ENCODE measurements at regions of chr6 and their contacts with region 1.

Region 1: DNA sequence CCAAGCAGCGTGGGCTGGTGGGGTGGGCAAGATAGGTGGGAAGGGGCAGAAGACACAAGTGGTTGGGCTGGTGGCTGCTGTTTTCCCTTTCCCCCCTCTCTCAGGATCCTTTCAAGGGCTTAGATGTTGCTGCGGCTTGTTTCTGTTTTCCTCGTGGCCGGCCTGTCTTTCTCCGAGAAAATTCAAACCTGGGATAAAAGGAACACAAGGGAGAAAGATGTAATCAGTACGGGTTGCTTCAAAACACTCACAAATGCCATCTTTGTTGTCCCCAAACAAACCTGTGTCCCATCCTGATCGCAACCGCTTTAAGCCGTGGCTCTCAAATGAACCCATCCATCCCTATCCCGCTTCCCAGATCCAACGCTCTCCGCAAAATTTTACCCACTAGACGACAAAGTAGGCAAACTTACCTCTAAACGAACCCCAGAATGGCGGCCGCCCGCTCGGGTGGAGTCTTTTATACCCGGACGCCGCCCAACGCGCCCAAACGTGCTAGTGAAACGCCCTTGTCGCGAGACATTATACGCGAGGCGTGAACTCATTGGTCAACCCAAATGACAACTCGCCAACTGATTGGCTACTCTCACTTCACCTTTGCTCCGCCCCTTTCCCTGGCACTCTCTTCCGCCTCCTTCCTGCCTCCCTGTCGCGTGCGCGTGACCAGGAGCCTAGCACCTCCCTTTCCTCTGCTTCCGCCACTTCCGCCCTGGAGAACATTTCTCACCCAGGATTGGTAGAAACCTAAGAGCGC is at the start of gene PPP1R10:
- DNase-seq: peak; percentile 94 to 100 (median 98)
- ATAC-seq: peak; percentile 78 to 81 (median 78)
- H3K4me3 ChIP-seq: peak within 1 kb of the TSS; percentile 88 to 100
- H3K4me3 Mint-ChIP-seq: peak within 1 kb of the TSS; percentile 93 to 100 (median 98)
- H3K27ac ChIP-seq: peak within 1 kb of the TSS; percentile 100
- H3K27ac Mint-ChIP-seq: peak within 1 kb of the TSS; percentile 100
- H3K4me1 ChIP-seq: peaks cover 29 to 33% of the 10 kb centered on the region in 2 experiments
- H3K4me1 Mint-ChIP-seq: peaks cover 42 to 49% (median 43%) of the 10 kb centered on the region in 3 donors
- H3K27me3 ChIP-seq: no peaks in the 10 kb centered on the region
- H3K27me3 Mint-ChIP-seq: peaks cover 0 to 2% of the 10 kb centered on the region in 2 donors
- total RNA-seq, gene PPP1R10: 104 to 170 (median 163) TPM

Region 2: DNA sequence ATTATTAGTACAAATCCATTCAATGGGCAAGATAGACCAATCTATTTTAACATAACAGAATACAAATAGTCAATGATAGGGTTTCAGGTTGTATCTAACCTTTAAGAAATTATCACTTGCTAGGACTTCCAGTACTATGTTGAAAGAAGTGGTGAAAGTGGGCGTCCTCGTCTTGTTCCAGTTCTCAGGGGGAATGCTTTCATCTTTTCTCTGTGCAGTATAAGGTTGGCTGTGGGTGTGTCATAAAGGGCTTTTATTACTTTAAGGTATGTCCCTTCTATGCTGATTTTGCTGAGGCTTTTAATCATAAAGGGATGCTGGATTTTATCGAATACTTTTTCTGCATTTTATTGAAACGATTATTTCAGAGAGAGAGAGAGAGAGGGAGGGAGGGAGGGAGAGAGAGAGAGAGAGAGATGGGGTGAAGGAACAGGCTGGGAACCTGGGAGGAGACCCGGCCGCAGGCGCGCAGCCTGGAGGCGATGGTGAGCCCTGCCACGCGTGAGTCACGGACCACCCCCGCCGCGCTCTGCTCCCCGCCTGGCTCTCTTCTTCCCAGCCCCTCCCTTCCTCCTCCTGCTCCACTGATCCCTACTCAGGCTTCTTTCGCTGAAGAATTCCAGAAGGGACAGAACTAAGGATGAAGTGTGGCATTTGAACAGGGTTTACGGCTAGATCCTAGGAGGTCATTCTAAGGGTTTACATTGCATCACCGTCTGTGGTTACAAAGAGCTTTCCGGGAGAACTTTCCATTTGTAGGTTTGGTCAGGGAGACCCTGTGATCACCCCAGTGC is 173.1 kb before region 1 on chr6:
- CTCF ChIA-PET with region 1: no interaction called
- POLR2A ChIA-PET with region 1: interaction called in 1 of 2 experiments, 20 read pairs
- DNase-seq: no peak
- ATAC-seq: peak in 1 of 4 experiments; percentile 48
- H3K4me3 ChIP-seq: no peak overlapping the region
- H3K4me3 Mint-ChIP-seq: no peak overlapping the region
- H3K27ac ChIP-seq: no peak overlapping the region
- H3K27ac Mint-ChIP-seq: no peak overlapping the region
- H3K4me1 ChIP-seq: peaks cover 0 to 6% of the 10 kb centered on the region in 2 experiments
- H3K4me1 Mint-ChIP-seq: peaks cover 2 to 12% (median 10%) of the 10 kb centered on the region in 3 donors
- H3K27me3 ChIP-seq: peaks cover 24 to 54% of the 10 kb centered on the region in 2 experiments
- H3K27me3 Mint-ChIP-seq: peaks cover 83% of the 10 kb centered on the region in 2 donors

Region 3: DNA sequence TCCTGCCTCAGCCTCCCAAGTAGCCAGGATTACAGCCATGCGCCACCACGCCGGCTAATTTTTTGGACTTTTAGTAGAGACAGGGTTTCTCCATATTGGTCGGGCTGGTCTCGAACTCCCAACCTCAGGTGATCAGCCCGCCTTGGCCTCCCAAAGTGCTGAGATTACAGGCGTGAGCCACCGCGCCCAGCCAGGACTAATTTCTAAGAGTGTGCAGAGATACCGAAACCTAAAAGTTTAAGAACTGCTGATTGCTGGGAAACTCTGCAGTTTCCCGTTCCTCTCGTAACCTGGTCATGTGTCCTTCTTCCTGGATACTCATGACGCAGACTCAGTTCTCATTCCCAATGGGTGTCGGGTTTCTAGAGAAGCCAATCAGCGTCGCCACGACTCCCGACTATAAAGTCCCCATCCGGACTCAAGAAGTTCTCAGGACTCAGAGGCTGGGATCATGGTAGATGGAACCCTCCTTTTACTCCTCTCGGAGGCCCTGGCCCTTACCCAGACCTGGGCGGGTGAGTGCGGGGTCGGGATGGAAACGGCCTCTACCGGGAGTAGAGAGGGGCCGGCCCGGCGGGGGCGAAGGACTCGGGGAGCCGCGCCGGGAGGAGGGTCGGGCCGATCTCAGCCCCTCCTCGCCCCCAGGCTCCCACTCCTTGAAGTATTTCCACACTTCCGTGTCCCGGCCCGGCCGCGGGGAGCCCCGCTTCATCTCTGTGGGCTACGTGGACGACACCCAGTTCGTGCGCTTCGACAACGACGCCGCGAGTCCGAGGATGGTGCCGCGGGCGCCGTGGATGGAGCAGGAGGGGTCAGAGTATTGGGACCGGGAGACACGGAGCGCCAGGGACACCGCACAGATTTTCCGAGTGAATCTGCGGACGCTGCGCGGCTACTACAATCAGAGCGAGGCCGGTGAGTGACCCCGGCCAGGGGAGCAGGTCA is 127.6 kb before region 1 on chr6 and contains the start of gene HLA-E:
- CTCF ChIA-PET with region 1: interaction called in 1 of 2 experiments, 6 read pairs
- POLR2A ChIA-PET with region 1: interaction called, 7 to 24 read pairs
- DNase-seq: peak; percentile 69 to 99 (median 90)
- ATAC-seq: peak; percentile 78 to 84 (median 84)
- H3K4me3 ChIP-seq: peak within 1 kb of the TSS; percentile 82 to 93
- H3K4me3 Mint-ChIP-seq: peak within 1 kb of the TSS; percentile 98 to 99 (median 99)
- H3K27ac ChIP-seq: peak within 1 kb of the TSS; percentile 89
- H3K27ac Mint-ChIP-seq: peak within 1 kb of the TSS; percentile 98 to 99
- H3K4me1 ChIP-seq: peaks cover 34 to 54% of the 10 kb centered on the region in 2 experiments
- H3K4me1 Mint-ChIP-seq: peaks cover 40 to 59% (median 56%) of the 10 kb centered on the region in 3 donors
- H3K27me3 ChIP-seq: peaks cover 0 to 3% of the 10 kb centered on the region in 2 experiments
- H3K27me3 Mint-ChIP-seq: no peaks in the 10 kb centered on the region
- total RNA-seq, gene HLA-E: 1,114 to 1,417 (median 1,253) TPM

Region 4: DNA sequence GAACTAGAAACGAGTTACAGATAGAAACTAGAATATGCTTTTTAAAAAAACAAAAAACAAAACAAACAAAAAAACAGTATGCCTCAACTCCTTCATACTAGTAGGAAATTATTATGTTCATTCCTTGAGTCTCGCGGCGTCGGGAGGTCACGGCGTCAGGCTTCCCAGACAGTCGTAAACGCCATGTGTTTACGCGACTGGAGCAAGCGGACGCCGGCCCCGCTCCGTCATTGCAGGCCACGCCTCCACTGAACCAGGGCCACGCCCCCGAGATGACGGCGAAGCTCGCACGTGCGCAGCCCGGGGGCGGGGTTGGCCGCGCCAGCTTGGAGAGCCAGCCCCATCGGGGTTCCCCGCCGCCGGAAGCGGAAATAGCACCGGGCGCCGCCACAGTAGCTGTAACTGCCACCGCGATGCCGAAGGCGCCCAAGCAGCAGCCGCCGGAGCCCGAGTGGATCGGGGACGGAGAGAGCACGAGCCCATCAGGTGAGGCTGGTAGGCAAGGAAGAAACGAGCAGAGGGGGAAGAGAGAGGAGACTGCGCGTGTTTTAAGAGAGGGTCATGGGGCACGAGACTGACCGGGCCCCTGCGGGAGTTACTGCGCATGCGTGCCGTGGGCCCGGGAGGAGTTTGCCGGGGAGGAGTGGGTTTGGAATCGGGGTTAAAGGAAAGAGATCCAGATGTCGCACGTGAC is 45.8 kb before region 1 on chr6 and contains the start of gene ABCF1:
- CTCF ChIA-PET with region 1: interaction called in 1 of 2 experiments, 5 read pairs
- POLR2A ChIA-PET with region 1: interaction called, 4 to 17 read pairs
- DNase-seq: peak; percentile 97 to 100 (median 99)
- ATAC-seq: peak; percentile 94 to 98 (median 96)
- H3K4me3 ChIP-seq: peak within 1 kb of the TSS; percentile 71 to 92
- H3K4me3 Mint-ChIP-seq: peak within 1 kb of the TSS; percentile 97 to 100 (median 98)
- H3K27ac ChIP-seq: peak within 1 kb of the TSS; percentile 87
- H3K27ac Mint-ChIP-seq: peak within 1 kb of the TSS; percentile 98 to 99
- H3K4me1 ChIP-seq: peaks cover 27 to 43% of the 10 kb centered on the region in 2 experiments
- H3K4me1 Mint-ChIP-seq: peaks cover 62 to 69% (median 66%) of the 10 kb centered on the region in 3 donors
- H3K27me3 ChIP-seq: no peaks in the 10 kb centered on the region
- H3K27me3 Mint-ChIP-seq: no peaks in the 10 kb centered on the region
- total RNA-seq, gene ABCF1: 61.1 to 89.9 (median 73.8) TPM

Region 5: GRCh38 chr6:30600451-30600961 is 16.5 kb before region 1 on chr6:
- CTCF ChIA-PET with region 1: interaction called in 1 of 2 experiments, 10 read pairs
- POLR2A ChIA-PET with region 1: interaction called, 5 to 12 read pairs
- DNase-seq: no peak
- ATAC-seq: no peak
- H3K4me3 ChIP-seq: no peak overlapping the region
- H3K4me3 Mint-ChIP-seq: no peak overlapping the region
- H3K27ac ChIP-seq: no peak overlapping the region
- H3K27ac Mint-ChIP-seq: peak overlapping the region in 1 of 2 donors; percentile 52
- H3K4me1 ChIP-seq: peaks cover 6 to 26% of the 10 kb centered on the region in 2 experiments
- H3K4me1 Mint-ChIP-seq: peaks cover 21 to 39% (median 22%) of the 10 kb centered on the region in 3 donors
- H3K27me3 ChIP-seq: no peaks in the 10 kb centered on the region
- H3K27me3 Mint-ChIP-seq: no peaks in the 10 kb centered on the region

Region 6: GRCh38 chr6:30646458-30647241 is 29.7 kb after region 1 on chr6 and contains the start of gene C6orf136:
- CTCF ChIA-PET with region 1: no interaction called
- POLR2A ChIA-PET with region 1: no interaction called
- DNase-seq: peak; percentile 80 to 97 (median 92)
- ATAC-seq: peak; percentile 81 to 86 (median 83)
- H3K4me3 ChIP-seq: peak within 1 kb of the TSS; percentile 78 to 94
- H3K4me3 Mint-ChIP-seq: peak within 1 kb of the TSS; percentile 81 to 89 (median 85)
- H3K27ac ChIP-seq: peak within 1 kb of the TSS; percentile 84
- H3K27ac Mint-ChIP-seq: peak within 1 kb of the TSS; percentile 89 to 91
- H3K4me1 ChIP-seq: peaks cover 11 to 33% of the 10 kb centered on the region in 2 experiments
- H3K4me1 Mint-ChIP-seq: peaks cover 25 to 33% (median 28%) of the 10 kb centered on the region in 3 donors
- H3K27me3 ChIP-seq: no peaks in the 10 kb centered on the region
- H3K27me3 Mint-ChIP-seq: no peaks in the 10 kb centered on the region
- total RNA-seq, gene C6orf136: 24.5 to 39.8 (median 31.4) TPM

Region 7: DNA sequence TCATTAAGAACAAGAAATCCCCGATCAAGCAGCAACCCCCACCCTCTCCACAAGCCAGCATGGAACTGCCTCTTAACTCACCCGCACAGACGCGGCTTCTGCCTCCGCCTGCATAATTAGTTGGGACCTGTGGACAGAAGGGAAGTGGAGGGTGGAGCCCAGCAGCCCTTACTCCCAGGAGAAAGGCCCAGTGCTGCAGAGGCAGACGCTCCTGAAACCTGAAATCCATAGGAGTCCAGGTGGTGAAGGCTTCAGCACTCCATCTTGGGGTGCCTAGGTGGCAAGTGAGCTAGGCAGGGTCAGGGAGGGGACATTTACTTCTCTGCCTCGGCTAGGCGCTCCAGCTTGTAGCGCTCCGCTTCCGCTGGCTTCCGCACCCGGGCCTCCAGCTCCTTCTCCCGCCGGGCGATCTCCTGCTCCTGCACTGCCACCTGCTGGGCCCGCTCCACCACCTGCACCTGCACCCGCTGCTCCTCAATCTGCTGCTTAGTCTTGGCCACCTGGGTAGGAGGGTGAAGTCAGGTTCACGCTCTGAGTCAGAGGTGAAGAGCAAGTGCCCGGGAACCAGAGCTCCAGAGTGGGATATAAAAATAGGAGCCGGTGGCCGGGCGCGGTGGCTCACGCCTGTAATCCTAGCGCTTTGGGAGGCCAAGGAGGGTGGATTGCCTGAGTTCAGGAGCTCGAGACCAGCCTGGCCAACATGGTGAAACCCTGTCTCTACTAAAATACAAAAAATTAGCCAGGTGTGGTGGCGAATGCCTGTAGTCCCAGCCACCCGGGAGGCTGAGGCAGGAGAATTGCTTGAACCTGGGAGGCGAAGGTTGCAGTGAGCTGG is 113.8 kb after region 1 on chr6:
- CTCF ChIA-PET with region 1: no interaction called
- POLR2A ChIA-PET with region 1: interaction called in 1 of 2 experiments, 12 read pairs
- DNase-seq: peak; percentile 67 to 89 (median 79)
- ATAC-seq: peak; percentile 95 to 97 (median 97)
- H3K4me3 ChIP-seq: peak overlapping the region in 1 of 2 donors; percentile 6
- H3K4me3 Mint-ChIP-seq: peak overlapping the region in 1 of 3 donors; percentile 56
- H3K27ac ChIP-seq: peak overlapping the region; percentile 28
- H3K27ac Mint-ChIP-seq: peak overlapping the region; percentile 71 to 79
- H3K4me1 ChIP-seq: peaks cover 8 to 35% of the 10 kb centered on the region in 2 experiments
- H3K4me1 Mint-ChIP-seq: peaks cover 31 to 46% (median 33%) of the 10 kb centered on the region in 3 donors
- H3K27me3 ChIP-seq: no peaks in the 10 kb centered on the region
- H3K27me3 Mint-ChIP-seq: no peaks in the 10 kb centered on the region